ENCODE measurements at regions of chr5 and their contacts with region 1.

Region 1: GRCh38 chr5:73201547-73202513 is 28.8 kb downstream of the TMEM174 start:
- DNase-seq: peak; percentile 92
- H3K4me3 ChIP-seq: peak overlapping the region in 3 of 4 donors; percentile 9 to 40 (median 21)
- H3K27ac ChIP-seq: peak overlapping the region in 3 of 4 donors; percentile 35 to 43 (median 38)
- H3K4me1 ChIP-seq: peaks cover 0 to 17% (median 10%) of the 10 kb centered on the region in 4 donors
- H3K27me3 ChIP-seq: peaks cover 7% of the 10 kb centered on the region
- CTCF ChIP-seq: peak; percentile 79 to 91 (median 83)
- EP300 ChIP-seq: no peak
- POLR2A ChIP-seq: peak; percentile 24

Region 2: DNA sequence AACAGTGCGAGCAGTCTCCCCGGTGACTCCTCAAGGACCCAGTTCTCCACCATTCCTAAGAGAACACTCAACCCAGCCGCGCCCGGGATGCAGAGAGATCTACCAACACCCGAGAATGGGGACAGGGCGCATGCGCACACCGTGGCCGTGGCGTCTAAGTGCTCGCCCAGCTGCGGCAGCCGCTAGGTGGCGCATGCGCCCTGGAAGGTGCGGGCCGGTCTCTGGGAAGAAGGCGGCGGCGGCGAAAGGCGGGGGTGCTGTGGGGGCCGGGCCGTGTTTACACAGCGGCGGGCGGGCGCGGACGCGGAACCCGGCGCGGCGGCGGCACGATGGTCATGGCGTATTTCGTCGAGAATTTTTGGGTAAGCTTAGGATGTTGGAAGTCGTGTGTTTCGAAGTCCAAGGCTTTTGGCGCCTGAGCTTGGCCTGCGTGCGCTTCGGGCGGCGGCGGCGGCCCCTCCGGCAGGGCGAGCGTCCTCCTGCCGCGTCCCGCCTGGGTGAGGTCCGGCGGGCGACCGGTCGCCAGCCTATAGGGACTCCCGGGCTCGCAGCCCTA is 246.0 kb before region 1 on chr5 and contains the start of gene FCHO2:
- in situ Hi-C with region 1: loop called in 1 of 4 experiments (anchors 10 kb)
- intact Hi-C with region 1: no loop called
- DNase-seq: peak; percentile 99
- H3K4me3 ChIP-seq: peak within 1 kb of the TSS; percentile 82 to 93 (median 90)
- H3K27ac ChIP-seq: peak within 1 kb of the TSS; percentile 96 to 97 (median 97)
- H3K4me1 ChIP-seq: peaks cover 4 to 54% (median 24%) of the 10 kb centered on the region in 4 donors
- H3K27me3 ChIP-seq: no peaks in the 10 kb centered on the region
- CTCF ChIP-seq: peak; percentile 86 to 98 (median 91)
- EP300 ChIP-seq: no peak
- POLR2A ChIP-seq: peak; percentile 87
- total RNA-seq, gene FCHO2: 25.8 to 45.4 (median 29.2) TPM

Region 3: GRCh38 chr5:73088026-73088425 is 113.8 kb before region 1 on chr5:
- in situ Hi-C with region 1: loop called in 2 of 4 experiments (anchors 10 kb)
- intact Hi-C with region 1: no loop called
- DNase-seq: no peak
- H3K4me3 ChIP-seq: no peak overlapping the region
- H3K27ac ChIP-seq: no peak overlapping the region
- H3K4me1 ChIP-seq: no peaks in the 10 kb centered on the region
- H3K27me3 ChIP-seq: no peaks in the 10 kb centered on the region
- CTCF ChIP-seq: no peak
- EP300 ChIP-seq: no peak
- POLR2A ChIP-seq: no peak

Measured in transverse colon (tissue), 4 donors.